SK-N-SH (cell line): ENCODE measurements at regions of chr20 and their contacts with region 1.

Region 1: GRCh38 chr20:1503564-1504227 is 12.5 kb upstream of the SIRPB2 start:
- DNase-seq: peak; percentile 67
- H3K4me3 ChIP-seq: peak overlapping the region in 1 of 2 experiments; percentile 32; a peak in 1 of 4 replicates
- H3K27ac ChIP-seq: no peak overlapping the region
- H3K4me1 ChIP-seq: no peaks in the 10 kb centered on the region
- H3K27me3 ChIP-seq: peaks cover 13% of the 10 kb centered on the region; the same call in 1 of the 2 replicates
- CTCF ChIP-seq: peak; percentile 97
- EP300 ChIP-seq: no peak
- RAD21 ChIP-seq: peak; percentile 76

Region 2: DNA sequence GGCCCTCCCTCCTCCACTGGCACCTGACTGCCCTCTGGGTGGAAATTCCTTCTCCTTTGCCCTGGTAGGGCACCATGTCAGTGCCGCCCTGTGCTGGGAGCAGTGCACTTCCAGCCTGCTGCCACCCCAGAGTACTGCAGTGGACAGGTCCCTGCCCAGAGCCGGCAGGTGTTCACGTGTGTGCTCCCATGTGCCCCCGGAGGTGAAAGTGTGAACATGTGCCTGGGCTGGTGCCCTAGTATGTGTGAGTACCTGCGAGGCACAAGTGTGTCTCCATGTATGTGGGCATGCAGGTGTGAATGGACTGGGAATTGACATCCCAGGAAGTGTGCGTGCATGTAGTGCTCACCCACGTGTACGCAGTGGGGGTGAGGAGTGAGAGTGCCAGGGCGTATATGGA is 204.2 kb before region 1 on chr20:
- CTCF ChIA-PET with region 1: no interaction called
- POLR2A ChIA-PET with region 1: no interaction called
- DNase-seq: peak; percentile 67
- H3K4me3 ChIP-seq: no peak overlapping the region
- H3K27ac ChIP-seq: no peak overlapping the region
- H3K4me1 ChIP-seq: peaks cover 0 to 4% of the 10 kb centered on the region in 2 experiments; a peak in 1 of 4 replicates
- H3K27me3 ChIP-seq: no peaks in the 10 kb centered on the region
- CTCF ChIP-seq: peak; percentile 25; the same call in 1 of the 2 replicates
- EP300 ChIP-seq: no peak
- RAD21 ChIP-seq: no peak

Region 3: GRCh38 chr20:1313236-1313964 is 190.3 kb before region 1 on chr20:
- CTCF ChIA-PET with region 1: interaction called, 12 read pairs
- POLR2A ChIA-PET with region 1: no interaction called
- DNase-seq: peak; percentile 93
- H3K4me3 ChIP-seq: peak overlapping the region in 1 of 2 experiments; percentile 45; a peak in 1 of 4 replicates
- H3K27ac ChIP-seq: no peak overlapping the region
- H3K4me1 ChIP-seq: no peaks in the 10 kb centered on the region
- H3K27me3 ChIP-seq: no peaks in the 10 kb centered on the region
- CTCF ChIP-seq: peak; percentile 90
- EP300 ChIP-seq: no peak
- RAD21 ChIP-seq: peak; percentile 88

Region 4: DNA sequence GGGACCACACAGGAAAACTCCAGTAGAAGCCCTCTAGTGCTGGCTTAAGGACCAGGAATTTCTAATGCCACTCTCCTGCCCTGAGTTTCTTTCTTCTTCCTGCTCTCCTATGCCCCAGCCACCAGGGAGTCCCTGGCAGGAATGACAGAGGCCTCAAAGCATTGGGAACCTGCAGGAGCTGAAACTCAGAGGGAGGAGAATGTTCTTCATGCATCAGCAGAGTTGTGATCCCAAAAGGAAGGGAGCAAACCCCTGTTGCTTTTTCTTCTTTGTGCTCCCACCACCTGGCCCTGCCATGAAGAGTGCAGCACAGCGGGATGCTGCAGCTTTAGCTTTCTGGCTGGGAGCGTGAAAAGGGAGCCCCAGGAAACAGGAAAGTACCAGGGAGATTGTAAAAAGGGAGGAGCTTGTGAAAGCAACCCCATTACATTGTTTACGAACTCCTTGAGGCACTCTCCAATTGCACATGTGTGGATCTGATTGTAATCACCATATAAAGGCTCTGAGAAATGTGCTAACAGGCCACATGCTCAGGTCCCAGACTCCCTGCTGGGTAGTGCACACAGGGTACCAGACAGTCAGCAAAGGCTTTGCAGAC is 76.1 kb before region 1 on chr20:
- CTCF ChIA-PET with region 1: interaction called, 10 read pairs
- POLR2A ChIA-PET with region 1: no interaction called
- DNase-seq: peak; percentile 48
- H3K4me3 ChIP-seq: no peak overlapping the region
- H3K27ac ChIP-seq: peak overlapping the region in 1 of 2 experiments; percentile 81; a peak in 2 of 4 replicates
- H3K4me1 ChIP-seq: peaks cover 4 to 19% of the 10 kb centered on the region in 2 experiments; a peak in 3 of 4 replicates
- H3K27me3 ChIP-seq: no peaks in the 10 kb centered on the region
- CTCF ChIP-seq: no peak
- EP300 ChIP-seq: no peak
- RAD21 ChIP-seq: no peak

Region 5: DNA sequence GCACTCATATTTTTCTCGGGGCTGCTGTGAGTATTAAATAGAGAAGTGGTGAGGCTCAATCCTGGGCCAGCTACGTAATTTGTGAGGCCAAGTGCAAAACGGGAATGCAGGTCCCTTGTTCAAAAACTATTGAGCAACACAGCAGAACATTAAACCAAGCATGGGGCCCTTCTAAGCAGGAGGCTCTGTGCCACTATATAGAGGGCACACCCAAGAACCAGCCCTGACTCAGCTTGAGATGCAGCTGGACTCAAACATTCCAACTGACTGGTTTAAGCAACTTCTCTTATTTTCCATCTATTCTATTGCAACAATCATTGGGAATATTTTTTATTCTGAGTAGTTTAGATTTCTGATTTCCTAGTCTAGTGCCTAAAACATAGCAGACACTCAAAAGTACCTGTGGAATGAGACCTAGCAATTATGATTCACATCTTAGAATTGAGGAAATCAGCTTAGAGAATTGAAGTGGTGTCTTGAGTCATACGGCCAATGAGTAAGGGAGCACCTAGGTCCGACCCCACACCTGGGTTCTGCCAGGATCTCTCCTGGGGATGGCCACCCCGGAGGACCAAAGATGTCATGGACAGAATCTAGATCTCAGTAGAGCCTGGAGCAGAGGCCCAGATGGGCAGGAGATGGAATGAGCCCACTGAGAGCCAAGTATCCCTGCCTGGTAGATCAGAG is 13.8 kb before region 1 on chr20:
- CTCF ChIA-PET with region 1: interaction called, 11 read pairs
- POLR2A ChIA-PET with region 1: no interaction called
- DNase-seq: no peak
- H3K4me3 ChIP-seq: no peak overlapping the region
- H3K27ac ChIP-seq: no peak overlapping the region
- H3K4me1 ChIP-seq: no peaks in the 10 kb centered on the region; a peak in 1 of 4 replicates
- H3K27me3 ChIP-seq: peaks cover 50% of the 10 kb centered on the region
- CTCF ChIP-seq: no peak
- EP300 ChIP-seq: no peak
- RAD21 ChIP-seq: no peak